ENCODE measurements at regions of chr1 and their contacts with region 1.

Region 1: GRCh38 chr1:197180252-197180878 is 33.9 kb upstream of the ASPM start:
- DNase-seq: peak; percentile 42 to 59 (median 58)
- H3K4me3 ChIP-seq: no peak overlapping the region
- H3K27ac ChIP-seq: no peak overlapping the region
- H3K4me1 ChIP-seq: peaks cover 0 to 8% (median 4%) of the 10 kb centered on the region in 4 experiments
- H3K27me3 ChIP-seq: no peaks in the 10 kb centered on the region

Region 2: DNA sequence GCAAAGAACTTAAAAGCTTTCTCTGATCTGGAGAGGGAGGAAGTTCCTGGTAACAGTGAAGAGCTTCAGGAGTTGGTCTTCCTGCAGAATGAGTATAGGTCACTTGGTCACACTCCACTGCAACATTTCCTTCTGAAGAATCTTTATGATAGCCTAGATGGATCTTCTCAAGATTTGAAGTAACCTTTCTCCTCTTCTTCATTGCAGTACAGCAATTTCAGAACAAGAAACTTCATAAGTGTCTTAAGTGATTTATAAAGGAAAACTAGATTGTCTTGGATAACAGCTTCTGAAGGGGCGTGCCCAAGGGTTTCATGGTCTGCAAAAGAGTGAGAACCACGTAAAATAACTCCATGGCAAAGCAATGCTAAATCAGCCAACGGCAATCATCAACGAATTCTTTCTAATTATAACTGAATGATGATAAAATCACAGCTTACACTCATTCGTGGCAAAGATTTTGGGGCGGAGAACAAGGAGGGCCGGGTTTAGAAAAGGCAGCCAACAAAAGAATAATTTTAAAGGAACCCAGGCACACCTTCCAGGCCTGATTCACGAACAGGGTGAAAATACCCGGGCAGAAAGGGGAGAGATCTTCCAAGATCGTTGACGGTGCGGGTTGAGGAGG is 20.0 kb after region 1 on chr1:
- CTCF ChIA-PET with region 1: interaction called, 12 read pairs
- POLR2A ChIA-PET with region 1: no interaction called
- DNase-seq: peak in 2 of 3 donors; percentile 31 to 46
- H3K4me3 ChIP-seq: peak overlapping the region; percentile 87 to 99 (median 97)
- H3K27ac ChIP-seq: peak overlapping the region; percentile 86 to 94
- H3K4me1 ChIP-seq: peaks cover 4 to 39% (median 31%) of the 10 kb centered on the region in 4 experiments
- H3K27me3 ChIP-seq: no peaks in the 10 kb centered on the region

Region 3: DNA sequence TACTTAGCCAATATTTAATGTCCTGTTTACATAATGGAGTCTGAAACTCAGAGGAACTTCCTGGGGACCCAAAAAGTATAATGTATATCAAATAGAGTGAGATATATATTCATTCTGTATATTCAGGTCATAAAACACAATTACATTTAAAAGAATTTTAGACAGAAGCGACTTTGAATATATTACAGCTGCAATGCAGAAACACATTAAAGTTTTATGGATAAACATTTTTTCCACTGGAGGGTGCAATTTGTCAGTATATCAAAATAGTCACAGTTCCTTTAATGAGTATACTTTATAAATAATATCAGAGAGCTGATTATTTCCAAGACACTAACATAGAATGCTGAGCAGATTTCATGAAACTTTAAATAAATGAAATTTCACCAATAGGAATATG is 43.8 kb after region 1 on chr1:
- CTCF ChIA-PET with region 1: interaction called, 10 read pairs
- POLR2A ChIA-PET with region 1: no interaction called
- DNase-seq: peak in 1 of 3 donors; percentile 13
- H3K4me3 ChIP-seq: no peak overlapping the region
- H3K27ac ChIP-seq: no peak overlapping the region
- H3K4me1 ChIP-seq: peaks cover 0 to 4% (median 0%) of the 10 kb centered on the region in 4 experiments
- H3K27me3 ChIP-seq: no peaks in the 10 kb centered on the region

Region 4: GRCh38 chr1:197336571-197336970 is 156.2 kb after region 1 on chr1:
- CTCF ChIA-PET with region 1: interaction called, 13 read pairs
- POLR2A ChIA-PET with region 1: no interaction called
- DNase-seq: no peak
- H3K4me3 ChIP-seq: no peak overlapping the region
- H3K27ac ChIP-seq: no peak overlapping the region
- H3K4me1 ChIP-seq: peaks cover 0 to 11% (median 4%) of the 10 kb centered on the region in 4 experiments
- H3K27me3 ChIP-seq: peaks cover 0 to 28% (median 0%) of the 10 kb centered on the region in 5 experiments

Region 5: DNA sequence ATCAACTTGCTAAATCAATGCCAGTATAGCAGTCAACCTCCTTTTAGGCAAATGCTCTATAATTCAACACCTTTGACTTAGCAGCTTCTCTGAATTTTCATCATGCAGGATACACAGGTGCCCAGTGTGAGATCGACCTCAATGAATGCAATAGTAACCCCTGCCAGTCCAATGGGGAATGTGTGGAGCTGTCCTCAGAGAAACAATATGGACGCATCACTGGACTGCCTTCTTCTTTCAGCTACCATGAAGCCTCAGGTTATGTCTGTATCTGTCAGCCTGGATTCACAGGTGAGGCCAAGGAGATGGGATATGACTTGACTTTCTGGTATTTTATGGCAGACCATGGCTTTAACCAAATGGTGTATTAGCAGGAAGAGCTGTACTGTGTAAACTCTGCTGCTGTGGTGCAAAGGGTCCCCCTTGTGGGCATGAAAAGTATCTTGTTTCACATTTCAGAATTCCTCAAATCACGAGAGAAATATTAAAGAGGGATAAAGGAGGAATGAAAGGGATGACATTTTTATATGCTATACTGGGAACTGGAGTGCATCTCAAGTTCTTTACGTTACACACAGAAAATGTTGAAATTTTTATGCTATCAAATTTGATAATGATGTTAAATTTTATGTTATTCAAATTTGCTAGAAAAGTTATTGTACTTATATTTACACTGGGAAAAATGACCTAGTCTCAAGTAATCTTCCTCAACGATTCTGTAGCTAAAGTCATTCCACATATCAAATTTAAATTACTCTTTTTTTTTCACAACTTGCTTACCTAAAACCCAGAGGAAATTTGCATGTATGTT is 176.6 kb after region 1 on chr1:
- CTCF ChIA-PET with region 1: interaction called, 38 read pairs
- POLR2A ChIA-PET with region 1: no interaction called
- DNase-seq: peak; percentile 40 to 71 (median 60)
- H3K4me3 ChIP-seq: no peak overlapping the region
- H3K27ac ChIP-seq: no peak overlapping the region
- H3K4me1 ChIP-seq: no peaks in the 10 kb centered on the region
- H3K27me3 ChIP-seq: no peaks in the 10 kb centered on the region